ENCODE measurements at regions of chr17 and their contacts with region 1.

Region 1: GRCh38 chr17:8997994-8998628 is 23.2 kb upstream of the NTN1 start:
- DNase-seq: peak; percentile 83
- H3K4me3 Mint-ChIP-seq: no peak overlapping the region
- H3K27ac Mint-ChIP-seq: no peak overlapping the region
- H3K4me1 Mint-ChIP-seq: peaks cover 13% of the 10 kb centered on the region
- H3K27me3 Mint-ChIP-seq: peaks cover 52% of the 10 kb centered on the region

Region 2: GRCh38 chr17:8745586-8746500 is 252.3 kb before region 1 on chr17:
- CTCF ChIA-PET with region 1: interaction called, 12 read pairs
- DNase-seq: peak; percentile 81
- H3K4me3 Mint-ChIP-seq: peak overlapping the region; percentile 83
- H3K27ac Mint-ChIP-seq: peak overlapping the region; percentile 92
- H3K4me1 Mint-ChIP-seq: peaks cover 26% of the 10 kb centered on the region
- H3K27me3 Mint-ChIP-seq: peaks cover 11% of the 10 kb centered on the region

Region 3: DNA sequence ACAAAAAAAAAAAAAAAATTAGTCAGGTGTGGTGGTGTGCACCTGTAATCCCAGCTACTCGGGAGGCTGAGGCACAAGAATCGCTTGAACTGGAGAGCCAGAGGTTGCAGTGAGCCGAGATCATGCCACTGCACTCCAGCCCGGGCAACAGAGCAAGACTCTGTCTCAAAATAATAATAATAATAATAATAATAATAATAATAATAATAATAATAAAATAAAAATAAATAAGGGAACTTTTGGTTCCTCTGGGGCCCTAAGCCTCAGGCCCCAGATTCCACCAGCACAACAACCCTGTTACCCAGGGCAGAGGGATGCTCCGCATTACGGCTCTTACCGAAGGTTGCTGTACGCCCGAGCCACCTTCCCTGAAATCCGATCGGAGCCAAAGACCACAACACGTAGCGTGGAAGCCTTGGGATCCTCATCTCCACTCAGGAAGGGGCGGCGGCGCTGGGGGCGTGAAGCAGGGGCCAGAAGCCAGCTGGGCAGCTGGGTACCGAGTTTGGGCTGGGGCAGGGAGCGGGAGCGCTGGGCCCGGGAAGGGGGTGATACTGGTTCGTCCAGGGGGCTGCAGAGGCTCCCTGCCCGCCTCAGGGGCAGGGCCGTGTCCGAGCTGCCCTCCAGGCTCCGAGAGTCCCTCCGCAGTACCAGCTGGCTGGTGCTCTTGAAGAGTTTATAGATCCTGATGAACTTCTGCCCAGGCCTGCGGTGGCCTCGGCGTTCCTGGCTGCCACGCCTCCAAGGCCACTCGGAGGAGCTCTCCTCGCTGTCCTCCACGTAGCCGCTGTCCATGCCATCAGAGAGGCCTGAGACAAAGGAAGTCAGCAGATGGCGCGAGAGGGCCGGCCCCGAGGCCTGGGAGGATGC is 110.0 kb before region 1 on chr17:
- CTCF ChIA-PET with region 1: interaction called, 11 read pairs
- DNase-seq: peak; percentile 12
- H3K4me3 Mint-ChIP-seq: no peak overlapping the region
- H3K27ac Mint-ChIP-seq: no peak overlapping the region
- H3K4me1 Mint-ChIP-seq: peaks cover 4% of the 10 kb centered on the region
- H3K27me3 Mint-ChIP-seq: no peaks in the 10 kb centered on the region

Region 4: GRCh38 chr17:8894673-8895578 is 103.2 kb before region 1 on chr17:
- CTCF ChIA-PET with region 1: interaction called, 20 read pairs
- DNase-seq: peak; percentile 69
- H3K4me3 Mint-ChIP-seq: no peak overlapping the region
- H3K27ac Mint-ChIP-seq: no peak overlapping the region
- H3K4me1 Mint-ChIP-seq: peaks cover 60% of the 10 kb centered on the region
- H3K27me3 Mint-ChIP-seq: no peaks in the 10 kb centered on the region

Region 5: DNA sequence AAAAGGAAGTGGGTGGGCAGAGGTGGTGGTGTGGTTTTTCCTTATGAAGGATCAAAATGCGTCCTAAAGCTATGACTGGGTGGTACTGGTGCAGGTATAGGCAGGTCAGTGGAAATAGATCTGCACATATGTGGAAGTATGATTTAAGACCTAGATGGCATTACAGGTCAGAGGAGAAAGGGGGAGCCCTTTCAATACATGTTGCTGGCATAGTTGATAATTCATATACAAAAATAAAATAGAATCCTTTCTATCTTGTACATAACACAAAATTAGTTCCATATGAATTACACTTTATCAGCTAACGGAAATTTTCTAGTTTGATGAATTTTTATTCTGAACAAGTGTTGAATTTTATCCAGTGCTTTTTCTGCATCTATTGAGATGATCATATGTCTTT is 11.8 kb before region 1 on chr17:
- CTCF ChIA-PET with region 1: interaction called, 10 read pairs
- DNase-seq: no peak
- H3K4me3 Mint-ChIP-seq: no peak overlapping the region
- H3K27ac Mint-ChIP-seq: no peak overlapping the region
- H3K4me1 Mint-ChIP-seq: peaks cover 16% of the 10 kb centered on the region
- H3K27me3 Mint-ChIP-seq: peaks cover 14% of the 10 kb centered on the region

Region 6: DNA sequence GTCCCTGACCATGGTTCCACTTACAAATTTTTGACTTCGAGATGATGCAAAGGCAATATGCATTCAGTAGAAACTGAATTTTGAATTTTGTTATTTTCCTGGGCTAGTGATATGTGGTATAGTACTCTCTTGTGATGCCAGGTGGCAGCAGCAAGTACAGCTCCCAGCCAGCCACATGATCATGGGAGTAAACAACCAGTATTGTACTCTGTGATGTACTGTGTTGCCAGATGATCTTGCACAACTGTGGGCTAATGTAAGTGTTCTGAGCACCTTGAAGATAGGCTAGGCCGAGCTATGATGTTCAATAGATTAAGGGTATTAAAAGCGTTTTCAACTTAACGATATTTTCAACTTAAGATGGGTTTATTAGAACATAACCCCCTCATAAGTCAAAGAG is 326.8 kb after region 1 on chr17:
- CTCF ChIA-PET with region 1: no interaction called
- DNase-seq: no peak
- H3K4me3 Mint-ChIP-seq: no peak overlapping the region
- H3K27ac Mint-ChIP-seq: no peak overlapping the region
- H3K4me1 Mint-ChIP-seq: no peaks in the 10 kb centered on the region
- H3K27me3 Mint-ChIP-seq: peaks cover 3% of the 10 kb centered on the region

Measured in activated naive CD4-positive, alpha-beta T cell treated with anti-CD3 and anti-CD28 coated beads, Interleukin-2, amount 10 ng/mL, durations not matched to agents 7 days and 5 days (primary cell).